ENCODE measurements at regions of chr17 and their contacts with region 1.

Region 1: GRCh38 chr17:17849845-17850373 is 13.1 kb upstream of the SREBF1 start:
- DNase-seq: peak; percentile 37 to 91 (median 60)
- ATAC-seq: peak; percentile 68
- H3K4me3 ChIP-seq: no peak overlapping the region
- H3K4me3 Mint-ChIP-seq: peak overlapping the region; percentile 72
- H3K27ac ChIP-seq: peak overlapping the region; percentile 83
- H3K27ac Mint-ChIP-seq: peak overlapping the region; percentile 99
- H3K4me1 ChIP-seq: peaks cover 56% of the 10 kb centered on the region
- H3K4me1 Mint-ChIP-seq: peaks cover 52% of the 10 kb centered on the region
- H3K27me3 ChIP-seq: no peaks in the 10 kb centered on the region
- H3K27me3 Mint-ChIP-seq: no peaks in the 10 kb centered on the region
- CTCF ChIP-seq: peak; percentile 21

Region 2: DNA sequence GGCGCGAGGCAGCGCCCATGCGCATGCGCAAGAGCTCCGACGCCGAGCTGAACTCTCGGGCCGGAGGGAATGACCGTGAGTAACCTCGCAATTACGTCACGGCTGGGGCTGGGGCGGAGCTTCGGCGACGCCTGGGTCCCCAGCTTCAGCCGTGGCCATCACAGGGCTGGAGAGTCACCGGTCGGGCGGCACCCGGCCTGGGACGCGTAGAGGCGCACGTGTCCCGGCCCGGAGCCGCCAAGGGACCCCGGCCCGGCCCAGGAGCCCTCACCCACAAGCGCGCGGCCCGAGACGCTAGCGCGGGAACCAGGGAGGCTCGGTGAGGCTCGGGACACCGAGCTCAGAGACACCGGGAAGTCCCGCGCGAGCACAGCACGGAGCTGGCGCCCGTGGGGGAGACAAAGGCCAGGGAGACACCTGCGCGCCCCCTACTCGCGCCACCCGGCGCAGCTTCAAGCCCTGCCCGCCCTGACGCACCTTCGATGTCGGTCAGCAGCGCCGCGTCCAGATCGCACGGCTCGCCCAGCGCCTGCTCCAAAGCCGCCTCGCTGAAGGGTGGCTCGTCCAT is 13.6 kb before region 1 on chr17:
- CTCF ChIA-PET with region 1: interaction called, 6 read pairs
- POLR2A ChIA-PET with region 1: interaction called, 71 read pairs
- intact Hi-C with region 1: loop called in 1 of 2 experiments (anchors 1 kb)
- DNase-seq: peak; percentile 94 to 99 (median 97)
- ATAC-seq: peak; percentile 74
- H3K4me3 ChIP-seq: peak overlapping the region; percentile 77
- H3K4me3 Mint-ChIP-seq: peak overlapping the region; percentile 94
- H3K27ac ChIP-seq: peak overlapping the region; percentile 96 to 97
- H3K27ac Mint-ChIP-seq: peak overlapping the region; percentile 98
- H3K4me1 ChIP-seq: peaks cover 82% of the 10 kb centered on the region
- H3K4me1 Mint-ChIP-seq: peaks cover 69% of the 10 kb centered on the region
- H3K27me3 ChIP-seq: no peaks in the 10 kb centered on the region
- H3K27me3 Mint-ChIP-seq: no peaks in the 10 kb centered on the region
- CTCF ChIP-seq: no peak

Region 3: DNA sequence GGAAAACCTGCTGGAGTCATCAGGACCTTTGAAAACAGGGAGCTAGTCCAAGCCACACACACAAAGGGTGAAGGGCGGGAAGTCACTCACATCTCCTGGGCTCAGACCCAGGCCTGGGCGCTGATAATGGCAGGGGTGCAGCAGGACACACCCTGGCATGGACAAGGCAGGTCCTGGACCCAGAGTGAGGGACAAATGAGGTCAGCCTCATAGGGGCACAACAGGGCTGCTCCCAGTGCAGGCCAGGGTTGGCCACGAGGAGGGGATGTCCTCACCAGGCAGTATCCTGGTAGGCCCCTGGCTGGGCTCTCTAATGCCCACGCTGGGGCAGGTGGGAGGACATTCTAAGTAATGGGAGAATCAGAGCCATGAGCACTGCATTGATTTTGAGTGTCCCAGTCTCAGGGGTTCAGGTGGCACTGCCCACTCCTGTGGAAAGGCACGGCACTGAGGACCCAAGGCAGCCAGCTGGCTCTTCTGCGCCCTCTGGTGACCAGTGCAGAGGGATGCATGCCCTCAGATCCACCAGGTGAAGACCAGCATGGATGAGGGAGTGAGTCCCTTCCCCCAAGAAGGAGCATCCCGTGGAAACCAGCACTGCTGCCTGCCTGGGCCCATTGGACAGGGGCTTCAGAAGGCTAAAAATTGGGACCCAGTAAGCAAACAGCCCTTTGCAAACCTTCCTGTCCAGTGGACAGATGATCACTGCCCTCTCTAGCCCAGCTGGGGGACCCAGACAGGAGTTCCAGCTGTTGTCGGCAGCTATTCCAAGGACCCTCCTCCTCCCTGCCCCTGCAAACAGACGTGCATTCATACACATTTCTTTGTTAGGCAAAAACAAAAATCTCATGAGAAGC is 10.2 kb after region 1 on chr17:
- CTCF ChIA-PET with region 1: interaction called, 12 read pairs
- POLR2A ChIA-PET with region 1: no interaction called
- intact Hi-C with region 1: no loop called
- DNase-seq: peak; percentile 53 to 86 (median 65)
- ATAC-seq: peak; percentile 97
- H3K4me3 ChIP-seq: no peak overlapping the region
- H3K4me3 Mint-ChIP-seq: no peak overlapping the region
- H3K27ac ChIP-seq: no peak overlapping the region
- H3K27ac Mint-ChIP-seq: no peak overlapping the region
- H3K4me1 ChIP-seq: peaks cover 29% of the 10 kb centered on the region
- H3K4me1 Mint-ChIP-seq: peaks cover 34% of the 10 kb centered on the region
- H3K27me3 ChIP-seq: no peaks in the 10 kb centered on the region
- H3K27me3 Mint-ChIP-seq: no peaks in the 10 kb centered on the region
- CTCF ChIP-seq: peak; percentile 97

Region 4: GRCh38 chr17:17959520-17960361 is 109.8 kb after region 1 on chr17:
- CTCF ChIA-PET with region 1: no interaction called
- POLR2A ChIA-PET with region 1: no interaction called
- intact Hi-C with region 1: no loop called
- DNase-seq: peak in 4 of 14 experiments; percentile 16 to 68 (median 49)
- ATAC-seq: peak; percentile 37
- H3K4me3 ChIP-seq: peak overlapping the region; percentile 46
- H3K4me3 Mint-ChIP-seq: peak overlapping the region; percentile 85
- H3K27ac ChIP-seq: peak overlapping the region; percentile 64 to 92
- H3K27ac Mint-ChIP-seq: peak overlapping the region; percentile 97
- H3K4me1 ChIP-seq: peaks cover 45% of the 10 kb centered on the region
- H3K4me1 Mint-ChIP-seq: peaks cover 75% of the 10 kb centered on the region
- H3K27me3 ChIP-seq: no peaks in the 10 kb centered on the region
- H3K27me3 Mint-ChIP-seq: no peaks in the 10 kb centered on the region
- CTCF ChIP-seq: no peak